Vagina (tissue), 2 donors: ENCODE measurements at regions of chr7 and their contacts with region 1.

Region 1: DNA sequence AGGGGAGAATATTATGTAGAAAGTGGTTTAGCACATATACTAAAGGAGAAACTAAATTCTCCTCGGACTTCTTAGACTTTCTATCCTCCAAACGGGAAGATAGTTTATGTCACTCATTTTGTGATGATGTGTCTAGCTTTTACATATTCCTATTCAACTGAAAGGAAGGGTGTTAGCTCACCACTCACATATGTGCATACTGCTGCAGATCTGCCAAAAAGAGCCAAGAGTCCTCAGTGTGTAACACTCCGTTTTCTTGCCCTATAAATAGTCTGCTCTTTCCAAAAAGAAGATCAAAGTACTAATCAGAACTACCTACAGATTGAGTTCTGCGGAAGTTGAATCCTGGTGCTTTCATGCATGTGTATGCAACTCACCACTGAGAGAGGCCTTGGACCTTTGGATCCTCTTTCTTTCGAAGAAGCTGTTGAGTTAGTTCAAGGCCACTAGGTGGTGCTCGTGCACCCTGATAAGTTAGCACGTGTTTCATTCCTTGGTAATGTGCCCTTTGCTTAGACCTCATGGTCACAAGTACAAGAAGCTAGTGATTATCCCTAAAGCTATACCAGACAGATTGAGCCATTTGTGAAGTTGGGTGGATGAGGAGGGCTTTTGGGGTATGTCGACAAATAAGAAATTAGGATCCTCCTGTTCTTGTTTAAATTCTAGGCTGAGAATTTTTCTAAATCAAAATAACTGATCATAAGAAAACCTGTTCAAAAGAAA is 14.1 kb downstream of the YAE1 start:
- DNase-seq: no peak
- H3K4me3 ChIP-seq: no peak overlapping the region
- H3K27ac ChIP-seq: no peak overlapping the region
- H3K4me1 ChIP-seq: no peaks in the 10 kb centered on the region
- H3K27me3 ChIP-seq: no peaks in the 10 kb centered on the region
- CTCF ChIP-seq: peak; percentile 75 to 88 (median 86)
- POLR2A ChIP-seq: no peak

Region 2: GRCh38 chr7:39172137-39172536 is 408.2 kb before region 1 on chr7:
- intact Hi-C with region 1: no loop called
- DNase-seq: no peak
- H3K4me3 ChIP-seq: no peak overlapping the region
- H3K27ac ChIP-seq: no peak overlapping the region
- H3K4me1 ChIP-seq: no peaks in the 10 kb centered on the region
- H3K27me3 ChIP-seq: no peaks in the 10 kb centered on the region
- CTCF ChIP-seq: no peak
- POLR2A ChIP-seq: no peak

Region 3: GRCh38 chr7:39746103-39746819 is 165.9 kb after region 1 on chr7:
- intact Hi-C with region 1: loop called (anchors 5 kb)
- DNase-seq: no peak
- H3K4me3 ChIP-seq: no peak overlapping the region
- H3K27ac ChIP-seq: no peak overlapping the region
- H3K4me1 ChIP-seq: no peaks in the 10 kb centered on the region
- H3K27me3 ChIP-seq: no peaks in the 10 kb centered on the region
- CTCF ChIP-seq: peak; percentile 39 to 82 (median 69)
- POLR2A ChIP-seq: no peak